ENCODE measurements at regions of chr17 and their contacts with region 1.

Region 1: DNA sequence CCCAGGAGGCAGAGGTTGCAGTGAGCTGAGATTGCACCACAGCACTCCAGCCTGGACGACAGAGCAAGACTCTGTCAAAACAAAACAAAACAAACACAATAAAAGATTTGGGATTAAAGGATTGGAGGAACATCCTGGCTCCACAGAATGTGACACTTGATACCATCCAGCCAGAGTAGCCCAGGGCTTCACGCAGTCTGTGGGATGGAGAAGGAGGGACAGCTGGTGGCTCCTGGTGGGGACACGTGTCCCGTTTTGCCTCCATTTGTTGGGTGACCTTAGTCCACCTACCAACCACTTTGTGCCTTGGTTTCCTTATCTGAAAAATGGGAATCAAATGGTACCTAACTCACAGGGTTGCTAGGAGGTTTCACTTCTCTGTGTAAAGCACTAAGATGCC is 12.4 kb upstream of the CYB561 start:
- DNase-seq: no peak
- ATAC-seq: 0 out of 6 replicates have a peak, but pooled peaks of 1 of the 2 experiments have one; percentile 8
- H3K4me3 ChIP-seq: no peak overlapping the region
- H3K27ac ChIP-seq: no peak overlapping the region
- H3K4me1 ChIP-seq: peaks cover 25% of the 10 kb centered on the region
- CTCF ChIP-seq: no peak
- EP300 ChIP-seq: no peak
- POLR2A ChIP-seq: no peak
- RAD21 ChIP-seq: no peak

Region 2: GRCh38 chr17:63381101-63381729 is 77.3 kb before region 1 on chr17:
- CTCF ChIA-PET with region 1: no interaction called
- POLR2A ChIA-PET with region 1: no interaction called
- DNase-seq: no peak
- ATAC-seq: no peak
- H3K4me3 ChIP-seq: no peak overlapping the region
- H3K27ac ChIP-seq: no peak overlapping the region
- H3K4me1 ChIP-seq: no peaks in the 10 kb centered on the region; the same call in 2 of the 3 replicates
- CTCF ChIP-seq: no peak
- EP300 ChIP-seq: no peak
- POLR2A ChIP-seq: no peak
- RAD21 ChIP-seq: no peak

Region 3: DNA sequence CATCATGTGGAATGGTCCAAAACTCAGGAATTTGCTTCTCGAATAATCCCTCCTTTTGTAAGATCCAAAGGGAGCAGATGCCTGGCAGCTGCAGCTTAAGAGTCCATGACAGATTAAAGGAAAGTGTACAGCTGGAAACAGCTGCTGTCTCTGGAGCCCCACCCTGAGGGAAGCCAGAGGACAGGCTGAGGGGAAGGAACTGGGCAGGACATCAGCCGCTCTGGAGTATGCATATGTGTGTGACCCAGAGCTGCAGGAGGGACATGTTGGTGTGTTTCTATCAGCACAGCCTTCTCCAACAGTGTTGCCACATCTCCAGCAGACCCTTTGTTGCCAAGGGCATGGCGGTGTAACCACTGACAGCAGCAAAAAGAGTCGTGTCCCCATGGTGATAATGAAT is 58.6 kb before region 1 on chr17:
- CTCF ChIA-PET with region 1: no interaction called
- POLR2A ChIA-PET with region 1: no interaction called
- DNase-seq: no peak
- ATAC-seq: no peak
- H3K4me3 ChIP-seq: no peak overlapping the region
- H3K27ac ChIP-seq: no peak overlapping the region
- H3K4me1 ChIP-seq: no peaks in the 10 kb centered on the region
- CTCF ChIP-seq: no peak
- EP300 ChIP-seq: no peak
- POLR2A ChIP-seq: no peak
- RAD21 ChIP-seq: no peak

Region 4: GRCh38 chr17:63445979-63446691 is 12.3 kb before region 1 on chr17 and contains the start of gene CYB561:
- CTCF ChIA-PET with region 1: interaction called, 12 read pairs
- POLR2A ChIA-PET with region 1: interaction called, 10 read pairs
- DNase-seq: peak; percentile 81 to 92
- ATAC-seq: peak; percentile 88 to 94
- H3K4me3 ChIP-seq: peak within 1 kb of the TSS; percentile 69
- H3K27ac ChIP-seq: peak within 1 kb of the TSS; percentile 94 to 98
- H3K4me1 ChIP-seq: peaks cover 15% of the 10 kb centered on the region
- CTCF ChIP-seq: peak; percentile 61
- EP300 ChIP-seq: no peak
- POLR2A ChIP-seq: peak; percentile 47
- RAD21 ChIP-seq: peak in 1 of 2 experiments; percentile 44; a peak in 3 of 5 replicates
- polyA plus RNA-seq, gene CYB561: 16.6 and 19.7 TPM in 2 replicates